HCT116 (cell line): ENCODE measurements at regions of chr2 and their contacts with region 1.

Region 1: GRCh38 chr2:62774555-62775366 is 69.2 kb downstream of the EHBP1 start:
- DNase-seq: peak; percentile 49
- ATAC-seq: peak; percentile 88
- H3K4me3 ChIP-seq: no peak overlapping the region
- H3K27ac ChIP-seq: peak overlapping the region; percentile 77
- H3K4me1 ChIP-seq: peaks cover 23 to 38% of the 10 kb centered on the region in 2 experiments
- H3K27me3 ChIP-seq: no peaks in the 10 kb centered on the region
- CTCF ChIP-seq: peak; percentile 65 to 77 (median 67)
- POLR2A ChIP-seq: no peak
- RAD21 ChIP-seq: peak; percentile 82

Region 2: GRCh38 chr2:61922714-61923113 is 852.0 kb before region 1 on chr2:
- CTCF ChIA-PET with region 1: no interaction called
- POLR2A ChIA-PET with region 1: no interaction called
- RAD21 ChIA-PET with region 1: no interaction called
- intact Hi-C with region 1: loop called (anchors 2 kb)
- DNase-seq: no peak
- ATAC-seq: no peak
- H3K4me3 ChIP-seq: no peak overlapping the region
- H3K27ac ChIP-seq: no peak overlapping the region
- H3K4me1 ChIP-seq: no peaks in the 10 kb centered on the region
- H3K27me3 ChIP-seq: no peaks in the 10 kb centered on the region
- CTCF ChIP-seq: no peak
- POLR2A ChIP-seq: no peak
- RAD21 ChIP-seq: no peak

Region 3: DNA sequence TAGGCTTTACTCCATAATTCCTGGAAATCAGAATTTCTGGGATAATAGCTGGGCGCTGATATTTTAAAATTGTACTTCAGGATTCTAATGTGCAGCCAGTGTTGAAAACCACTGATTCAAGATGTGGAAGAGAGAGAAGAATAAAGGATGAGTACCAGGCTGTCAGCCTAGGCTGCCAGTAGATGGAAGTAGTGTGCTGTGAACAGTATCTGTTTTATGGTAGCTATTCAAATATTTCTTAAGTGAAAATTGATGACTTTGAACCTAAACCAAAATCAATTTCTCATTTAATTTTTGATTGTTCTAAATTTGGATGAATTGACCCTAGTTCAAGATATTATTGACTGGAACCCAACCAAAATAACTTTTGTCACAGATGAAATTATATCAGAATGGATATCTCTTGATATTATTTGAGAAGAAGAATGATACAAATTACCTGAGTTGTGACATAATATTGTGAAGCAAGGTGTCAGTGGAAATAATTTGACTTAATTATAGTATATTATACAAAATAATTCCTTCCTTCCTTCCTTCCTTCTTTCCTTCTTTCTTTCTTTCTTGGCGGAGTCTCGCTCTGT is 781.2 kb before region 1 on chr2:
- CTCF ChIA-PET with region 1: no interaction called
- POLR2A ChIA-PET with region 1: no interaction called
- RAD21 ChIA-PET with region 1: no interaction called
- intact Hi-C with region 1: loop called (anchors 5 kb)
- DNase-seq: peak; percentile 38
- ATAC-seq: peak; percentile 78
- H3K4me3 ChIP-seq: no peak overlapping the region
- H3K27ac ChIP-seq: no peak overlapping the region
- H3K4me1 ChIP-seq: peaks cover 4 to 5% of the 10 kb centered on the region in 2 experiments
- H3K27me3 ChIP-seq: no peaks in the 10 kb centered on the region
- CTCF ChIP-seq: peak; percentile 64 to 73 (median 66); a peak in 5 of 6 replicates
- POLR2A ChIP-seq: no peak
- RAD21 ChIP-seq: peak; percentile 90

Region 4: GRCh38 chr2:62577994-62578781 is 196.6 kb before region 1 on chr2:
- CTCF ChIA-PET with region 1: interaction called, 4 read pairs
- POLR2A ChIA-PET with region 1: no interaction called
- RAD21 ChIA-PET with region 1: no interaction called
- intact Hi-C with region 1: loop called (anchors 2 kb)
- DNase-seq: peak; percentile 99
- ATAC-seq: peak; percentile 80
- H3K4me3 ChIP-seq: peak overlapping the region in 1 of 2 experiments; percentile 28; a peak in 2 of 4 replicates
- H3K27ac ChIP-seq: peak overlapping the region; percentile 98
- H3K4me1 ChIP-seq: peaks cover 44 to 54% of the 10 kb centered on the region in 2 experiments
- H3K27me3 ChIP-seq: no peaks in the 10 kb centered on the region
- CTCF ChIP-seq: no peak
- POLR2A ChIP-seq: no peak
- RAD21 ChIP-seq: peak; percentile 54

Region 5: GRCh38 chr2:62705007-62705829 is 69.5 kb before region 1 on chr2 and contains the start of gene EHBP1:
- CTCF ChIA-PET with region 1: no interaction called
- POLR2A ChIA-PET with region 1: no interaction called
- RAD21 ChIA-PET with region 1: no interaction called
- intact Hi-C with region 1: loop called (anchors 5 kb)
- DNase-seq: peak; percentile 100
- ATAC-seq: peak; percentile 93
- H3K4me3 ChIP-seq: peak within 1 kb of the TSS; percentile 79 to 80
- H3K27ac ChIP-seq: peak within 1 kb of the TSS; percentile 69
- H3K4me1 ChIP-seq: peaks cover 8 to 33% of the 10 kb centered on the region in 2 experiments
- H3K27me3 ChIP-seq: no peaks in the 10 kb centered on the region
- CTCF ChIP-seq: no peak
- POLR2A ChIP-seq: peak; percentile 64
- RAD21 ChIP-seq: no peak
- total RNA-seq, gene EHBP1: 89.9 TPM